Left lung (tissue), 14 donors: ENCODE measurements at regions of chr11 and their contacts with region 1.

Region 1: GRCh38 chr11:125343718-125344131 is 152.3 kb downstream of the FEZ1 start:
- DNase-seq: no peak
- ATAC-seq: no peak
- H3K4me3 ChIP-seq: no peak overlapping the region
- H3K27ac ChIP-seq: no peak overlapping the region
- H3K4me1 ChIP-seq: no peaks in the 10 kb centered on the region
- H3K27me3 ChIP-seq: peaks cover 0 to 42% of the 10 kb centered on the region in 2 donors
- CTCF ChIP-seq: no peak

Region 2: DNA sequence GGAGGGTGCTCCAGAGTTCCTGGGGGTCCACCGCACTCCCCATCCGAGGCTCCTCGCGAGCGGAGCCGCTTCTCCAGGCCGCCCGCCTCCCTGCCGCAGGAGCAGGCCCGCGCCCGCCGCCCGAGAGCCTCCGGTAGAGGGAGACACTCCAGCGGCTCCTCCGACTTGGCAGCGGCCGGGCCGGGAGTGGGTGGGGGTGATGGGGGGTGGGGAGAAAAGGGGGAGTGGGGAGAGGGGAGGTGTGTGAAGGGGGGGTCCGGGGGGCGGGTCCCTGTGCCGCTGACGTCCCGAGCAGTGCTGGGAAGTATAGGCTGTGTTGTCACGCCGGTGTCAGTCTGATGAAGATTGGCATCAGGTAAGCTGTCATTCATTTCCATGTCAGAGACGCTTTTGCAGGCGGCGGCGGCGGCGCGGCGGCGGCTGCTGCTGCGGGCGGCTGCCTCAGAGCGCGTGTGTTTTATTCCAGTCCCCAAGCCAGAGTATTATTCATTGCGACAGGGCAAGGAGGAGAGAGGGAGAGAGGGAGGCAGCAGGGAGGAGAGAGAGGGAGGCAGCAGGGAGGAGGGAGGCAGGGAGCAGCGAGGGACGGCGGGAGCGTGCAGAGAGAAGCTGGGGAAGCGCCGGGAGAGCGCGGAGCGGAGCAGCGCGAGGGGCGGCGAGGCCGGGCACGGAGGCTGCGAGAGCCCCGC is 179.2 kb before region 1 on chr11 and contains the start of gene PKNOX2:
- intact Hi-C with region 1: loop called in 1 of 2 experiments (anchors 5 kb)
- DNase-seq: peak; percentile 72 to 90 (median 87)
- ATAC-seq: peak; percentile 87
- H3K4me3 ChIP-seq: peak within 1 kb of the TSS; percentile 49 to 50
- H3K27ac ChIP-seq: peak within 1 kb of the TSS; percentile 44 to 67
- H3K4me1 ChIP-seq: peaks cover 0 to 18% of the 10 kb centered on the region in 2 donors
- H3K27me3 ChIP-seq: peaks cover 35 to 69% of the 10 kb centered on the region in 2 donors
- CTCF ChIP-seq: peak; percentile 42 to 55
- polyA plus RNA-seq, gene PKNOX2: 14.1 to 18.9 (median 17.3) TPM